Caco-2 (cell line): ENCODE measurements at regions of chr19 and their contacts with region 1.

Region 1: DNA sequence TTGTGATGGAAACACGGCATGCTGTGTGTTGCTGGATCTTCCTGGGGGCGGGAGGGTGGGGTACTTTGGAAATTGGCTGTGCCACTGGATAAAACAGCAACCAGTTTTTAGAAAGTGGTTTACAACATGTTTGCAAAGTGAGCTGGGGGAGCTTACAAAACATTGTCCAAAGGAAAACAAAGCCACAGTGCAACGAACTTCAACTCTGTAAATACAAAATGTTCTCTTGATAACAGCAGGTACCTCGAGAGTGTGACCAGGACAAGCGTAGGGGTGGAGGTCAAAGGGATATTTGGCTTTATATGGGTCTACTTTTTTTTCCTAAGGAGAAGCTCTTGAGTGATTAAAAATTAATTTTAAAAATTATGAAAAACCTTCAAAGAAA is 2.5 kb downstream of the IGSF23 start:
- DNase-seq: no peak
- H3K4me3 ChIP-seq: no peak overlapping the region
- H3K4me3 Mint-ChIP-seq: no peak overlapping the region
- H3K27ac Mint-ChIP-seq: peak overlapping the region; percentile 78
- H3K4me1 ChIP-seq: peaks cover 55% of the 10 kb centered on the region
- H3K4me1 Mint-ChIP-seq: peaks cover 19% of the 10 kb centered on the region
- H3K27me3 ChIP-seq: no peaks in the 10 kb centered on the region
- H3K27me3 Mint-ChIP-seq: no peaks in the 10 kb centered on the region
- CTCF ChIP-seq: no peak

Region 2: GRCh38 chr19:44557933-44558332 is 57.9 kb before region 1 on chr19:
- CTCF ChIA-PET with region 1: no interaction called
- POLR2A ChIA-PET with region 1: no interaction called
- intact Hi-C with region 1: no loop called
- DNase-seq: no peak
- H3K4me3 ChIP-seq: no peak overlapping the region
- H3K4me3 Mint-ChIP-seq: no peak overlapping the region
- H3K27ac Mint-ChIP-seq: no peak overlapping the region
- H3K4me1 ChIP-seq: no peaks in the 10 kb centered on the region
- H3K4me1 Mint-ChIP-seq: peaks cover 23% of the 10 kb centered on the region
- H3K27me3 ChIP-seq: no peaks in the 10 kb centered on the region
- H3K27me3 Mint-ChIP-seq: no peaks in the 10 kb centered on the region
- CTCF ChIP-seq: no peak

Region 3: GRCh38 chr19:44643605-44644401 is 27.9 kb after region 1 on chr19 and contains the start of gene PVR:
- CTCF ChIA-PET with region 1: interaction called, 10 read pairs
- POLR2A ChIA-PET with region 1: interaction called, 6 read pairs
- intact Hi-C with region 1: loop called (anchors 1 kb)
- DNase-seq: peak; percentile 76 to 85
- H3K4me3 ChIP-seq: peak within 1 kb of the TSS; percentile 91
- H3K4me3 Mint-ChIP-seq: peak within 1 kb of the TSS; percentile 83
- H3K27ac Mint-ChIP-seq: peak within 1 kb of the TSS; percentile 79
- H3K4me1 ChIP-seq: peaks cover 31% of the 10 kb centered on the region
- H3K4me1 Mint-ChIP-seq: peaks cover 27% of the 10 kb centered on the region
- H3K27me3 ChIP-seq: no peaks in the 10 kb centered on the region
- H3K27me3 Mint-ChIP-seq: no peaks in the 10 kb centered on the region
- CTCF ChIP-seq: no peak
- total RNA-seq, gene PVR: 86.5 and 93.8 TPM in 2 replicates